ENCODE measurements at regions of chr5 and their contacts with region 1.

Region 1: DNA sequence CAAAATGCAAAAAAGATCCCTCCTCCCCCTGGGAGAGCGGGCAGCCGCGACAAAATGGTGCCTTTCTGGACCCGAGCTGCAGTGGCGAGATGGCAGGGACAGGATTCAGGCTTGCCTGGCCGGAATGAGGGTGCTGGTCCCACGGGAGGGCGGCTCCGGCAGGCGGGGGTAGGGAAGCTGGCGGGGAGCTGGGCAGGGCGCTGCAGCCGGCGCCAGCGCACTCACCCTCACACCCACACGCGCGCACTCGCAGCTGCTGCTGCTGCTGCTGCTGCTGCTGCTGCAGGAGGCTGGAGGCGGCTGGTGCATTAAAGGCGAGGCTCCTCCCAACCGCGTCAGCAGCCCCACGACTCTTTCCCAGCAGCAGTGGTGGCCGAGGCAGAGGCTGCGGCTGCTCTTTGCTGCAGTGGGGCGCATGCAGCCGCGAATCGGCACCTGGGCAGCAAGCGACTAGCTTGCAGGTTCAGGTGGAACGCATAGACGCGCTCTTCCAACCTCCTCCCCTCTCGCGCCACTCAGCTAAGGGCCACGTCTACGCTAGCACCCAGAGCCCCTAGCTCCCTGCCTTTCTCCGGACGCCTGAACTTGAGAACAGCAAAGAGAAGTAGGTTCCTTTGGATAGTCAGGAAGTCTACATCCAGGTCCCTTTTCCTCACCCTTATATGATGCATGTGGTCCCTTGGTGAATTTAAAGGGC is at the start of gene PPP2R2B:
- DNase-seq: peak in 7 of 9 donors; percentile 7 to 35 (median 18)
- ATAC-seq: peak; percentile 81
- H3K4me3 ChIP-seq: peak within 1 kb of the TSS; percentile 78
- H3K4me3 Mint-ChIP-seq: peak within 1 kb of the TSS; percentile 84 to 92 (median 88)
- H3K27ac ChIP-seq: no peak within 1 kb of the TSS
- H3K27ac Mint-ChIP-seq: peak within 1 kb of the TSS in 1 of 9 donors; percentile 49
- H3K4me1 ChIP-seq: peaks cover 4 to 14% of the 10 kb centered on the region in 2 donors
- H3K4me1 Mint-ChIP-seq: peaks cover 3 to 20% (median 9%) of the 10 kb centered on the region in 7 donors
- H3K27me3 ChIP-seq: no peaks in the 10 kb centered on the region
- H3K27me3 Mint-ChIP-seq: peaks cover 0 to 61% (median 22%) of the 10 kb centered on the region in 5 donors
- total RNA-seq, gene PPP2R2B: 0.24 to 14.1 (median 1.00) TPM

Region 2: DNA sequence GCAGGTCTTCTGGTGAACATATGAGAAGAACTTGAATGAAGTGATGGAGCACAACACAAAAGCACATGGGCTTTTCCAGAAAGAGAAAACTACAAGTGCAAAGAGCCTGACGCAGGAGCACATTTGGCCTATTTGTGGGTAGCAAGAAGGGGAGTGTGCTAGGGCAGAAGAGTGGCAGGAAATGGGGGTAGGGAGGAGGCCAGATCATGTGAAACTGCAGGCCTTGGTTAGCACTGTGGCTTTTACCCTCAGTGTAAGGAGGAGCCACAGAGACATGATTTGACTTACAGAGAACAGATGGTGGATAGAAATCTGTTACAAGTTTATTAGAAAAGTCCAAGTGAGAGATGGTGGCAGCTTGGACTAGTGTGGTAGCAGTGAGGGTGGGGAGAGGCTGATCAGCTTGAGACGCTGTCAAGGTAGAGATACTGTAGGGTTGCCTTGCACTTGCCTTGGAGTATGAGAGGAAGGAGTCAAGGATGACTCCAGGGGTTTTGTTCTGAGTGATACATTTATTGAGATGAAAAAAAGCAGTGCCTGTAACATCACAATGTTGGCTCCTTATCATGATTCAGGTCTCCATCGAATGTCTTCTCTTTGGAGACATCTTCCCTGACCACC is 126.7 kb before region 1 on chr5:
- CTCF ChIA-PET with region 1: no interaction called
- POLR2A ChIA-PET with region 1: no interaction called
- intact Hi-C with region 1: loop called in 1 of 2 experiments (anchors 5 kb)
- DNase-seq: peak in 8 of 9 donors; percentile 27 to 74 (median 64)
- ATAC-seq: peak; percentile 97
- H3K4me3 ChIP-seq: peak overlapping the region; percentile 8
- H3K4me3 Mint-ChIP-seq: peak overlapping the region; percentile 26 to 78 (median 56)
- H3K27ac ChIP-seq: peak overlapping the region; percentile 49
- H3K27ac Mint-ChIP-seq: peak overlapping the region; percentile 82 to 97 (median 90)
- H3K4me1 ChIP-seq: peaks cover 42 to 56% of the 10 kb centered on the region in 2 donors
- H3K4me1 Mint-ChIP-seq: peaks cover 31 to 62% (median 42%) of the 10 kb centered on the region in 7 donors
- H3K27me3 ChIP-seq: no peaks in the 10 kb centered on the region
- H3K27me3 Mint-ChIP-seq: peaks cover 0 to 4% (median 0%) of the 10 kb centered on the region in 5 donors

Region 3: DNA sequence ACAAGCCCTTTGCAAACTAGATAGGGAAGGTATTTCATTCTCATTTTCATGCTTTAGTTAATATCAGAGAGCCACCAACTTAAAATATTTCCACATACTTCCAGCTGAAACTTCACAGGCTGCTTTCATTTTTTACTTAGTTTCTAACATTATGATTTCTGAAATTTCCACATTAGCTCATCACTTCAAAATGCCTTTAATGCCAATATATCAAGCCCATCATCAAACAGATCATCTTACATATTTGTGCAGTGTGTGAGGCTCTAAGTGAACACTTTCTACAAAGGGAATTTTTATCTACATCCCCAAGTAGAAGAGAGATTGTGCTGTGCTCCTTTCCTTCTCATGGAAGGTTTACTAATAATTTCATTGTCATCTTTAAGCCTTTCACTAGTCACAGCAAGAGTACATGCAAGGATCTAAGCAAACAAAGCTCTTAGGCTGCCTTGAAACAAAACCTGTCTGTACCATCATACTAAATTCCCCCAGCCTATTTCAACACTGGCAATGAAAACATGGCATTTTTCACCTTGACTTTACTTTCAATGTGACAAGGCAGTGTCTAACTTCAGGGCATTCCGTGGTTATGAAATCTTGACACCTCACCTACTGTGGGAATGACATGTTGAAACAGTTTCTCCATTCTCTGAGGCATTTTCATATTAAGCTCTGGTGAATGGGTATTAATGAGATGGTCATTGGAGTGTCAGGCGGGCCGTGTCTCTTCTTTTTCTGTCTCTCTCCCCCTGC is 45.5 kb before region 1 on chr5:
- CTCF ChIA-PET with region 1: no interaction called
- POLR2A ChIA-PET with region 1: no interaction called
- intact Hi-C with region 1: no loop called
- DNase-seq: no peak
- ATAC-seq: no peak
- H3K4me3 ChIP-seq: no peak overlapping the region
- H3K4me3 Mint-ChIP-seq: no peak overlapping the region
- H3K27ac ChIP-seq: no peak overlapping the region
- H3K27ac Mint-ChIP-seq: no peak overlapping the region
- H3K4me1 ChIP-seq: no peaks in the 10 kb centered on the region
- H3K4me1 Mint-ChIP-seq: peaks cover 0 to 1% (median 0%) of the 10 kb centered on the region in 7 donors
- H3K27me3 ChIP-seq: no peaks in the 10 kb centered on the region
- H3K27me3 Mint-ChIP-seq: peaks cover 0 to 4% (median 0%) of the 10 kb centered on the region in 5 donors